ENCODE measurements at regions of chr6 and their contacts with region 1.

Region 1: DNA sequence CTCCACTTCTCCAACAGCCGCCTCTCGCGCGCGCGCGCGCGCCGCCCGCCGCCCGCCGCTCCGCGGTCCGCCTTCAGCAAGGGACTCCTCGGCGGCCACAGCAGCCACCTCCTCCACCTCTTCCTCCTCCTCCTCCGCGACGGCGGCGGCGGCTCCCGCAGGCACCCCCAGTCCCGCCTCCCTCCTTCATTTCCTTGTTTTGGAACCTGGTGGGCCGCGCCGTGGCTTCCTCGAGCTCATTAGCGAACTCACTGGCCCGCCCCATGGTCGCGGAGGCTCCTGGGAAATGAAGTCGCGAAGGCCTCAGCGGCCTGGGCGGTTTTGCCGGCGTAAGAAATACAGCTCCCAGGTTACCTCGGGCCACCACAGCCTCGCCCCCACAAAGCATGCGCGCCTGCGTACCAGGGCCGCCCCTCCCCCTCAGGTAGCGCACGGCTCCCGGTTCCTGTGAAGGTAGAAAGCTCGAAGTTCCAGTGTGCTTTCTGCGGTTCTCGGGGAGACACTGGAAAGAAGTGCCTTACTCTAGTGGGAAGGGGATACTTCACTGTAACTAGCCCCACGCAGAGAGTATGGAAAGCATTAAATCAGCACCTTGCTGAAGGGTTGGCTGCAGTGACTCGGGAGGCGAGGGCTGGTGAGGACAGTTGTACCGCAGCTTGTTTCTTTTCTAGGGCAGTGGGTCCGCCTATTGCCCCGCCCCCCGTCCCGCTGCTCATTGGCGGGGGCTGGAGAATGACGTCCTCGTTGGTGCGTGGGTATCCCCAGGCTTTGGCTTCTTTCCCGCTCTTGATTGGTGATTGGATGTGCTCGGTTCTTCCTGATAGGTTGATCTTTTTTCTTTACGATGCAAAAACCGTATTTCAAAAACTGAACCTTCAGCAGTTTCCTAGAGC is at the start of gene CDK19:
- DNase-seq: peak; percentile 92 to 98
- ATAC-seq: peak; percentile 93 to 94
- H3K4me3 ChIP-seq: peak within 1 kb of the TSS; percentile 98
- H3K27ac ChIP-seq: peak within 1 kb of the TSS; percentile 83 to 95
- H3K4me1 ChIP-seq: peaks cover 16% of the 10 kb centered on the region; the same call in 2 of the 3 replicates
- CTCF ChIP-seq: no peak
- EP300 ChIP-seq: no peak
- POLR2A ChIP-seq: peak; percentile 70
- RAD21 ChIP-seq: no peak
- polyA plus RNA-seq, gene CDK19: 17.3 and 18.6 TPM in 2 replicates

Region 2: DNA sequence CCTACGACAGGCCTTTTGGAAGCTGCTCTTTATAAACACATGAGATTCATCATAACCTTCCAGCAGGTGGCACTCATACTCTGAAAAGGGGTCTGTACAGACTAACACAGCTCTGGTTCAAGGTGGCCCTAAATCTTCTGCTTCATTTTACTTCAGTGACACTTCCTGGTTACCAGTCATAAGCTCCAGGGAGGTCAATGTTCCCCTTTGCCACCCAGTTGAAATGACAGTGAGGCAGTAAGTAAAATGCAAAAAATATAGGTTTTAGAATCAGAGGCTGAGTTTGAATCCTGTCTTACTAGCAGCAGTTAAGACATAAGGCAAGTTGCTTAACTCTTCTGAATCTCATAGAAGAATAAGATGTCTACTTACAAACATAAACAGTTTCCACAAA is 133.0 kb before region 1 on chr6:
- CTCF ChIA-PET with region 1: no interaction called
- POLR2A ChIA-PET with region 1: interaction called, 10 read pairs
- DNase-seq: peak; percentile 35 to 83
- ATAC-seq: peak; percentile 95 to 99
- H3K4me3 ChIP-seq: no peak overlapping the region
- H3K27ac ChIP-seq: peak overlapping the region; percentile 60 to 64; a peak in 3 of 6 replicates
- H3K4me1 ChIP-seq: peaks cover 20% of the 10 kb centered on the region
- CTCF ChIP-seq: peak; percentile 74
- EP300 ChIP-seq: no peak
- POLR2A ChIP-seq: no peak
- RAD21 ChIP-seq: peak; percentile 86 to 91

Region 3: DNA sequence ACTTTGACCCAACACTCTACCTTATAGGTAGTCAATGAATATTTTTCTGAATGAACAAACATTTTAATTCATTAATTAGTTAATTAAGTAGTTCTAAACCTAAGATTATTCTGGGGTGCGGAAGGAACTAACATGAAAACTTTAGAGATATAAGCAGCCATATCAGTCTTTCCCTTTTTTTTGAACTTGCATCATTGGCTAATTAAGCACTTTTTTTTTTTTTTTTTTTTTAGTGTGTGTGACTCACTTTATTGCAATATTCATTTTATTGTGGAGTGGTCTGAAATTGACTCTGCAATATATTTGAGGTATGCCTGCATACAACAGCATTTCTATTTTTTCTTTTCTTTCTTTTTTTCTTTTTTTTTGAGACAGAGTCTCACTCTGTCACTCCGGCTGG is 37.3 kb after region 1 on chr6:
- CTCF ChIA-PET with region 1: no interaction called
- POLR2A ChIA-PET with region 1: no interaction called
- DNase-seq: no peak
- ATAC-seq: no peak
- H3K4me3 ChIP-seq: no peak overlapping the region
- H3K27ac ChIP-seq: no peak overlapping the region
- H3K4me1 ChIP-seq: no peaks in the 10 kb centered on the region
- CTCF ChIP-seq: no peak
- EP300 ChIP-seq: no peak
- POLR2A ChIP-seq: no peak
- RAD21 ChIP-seq: no peak

Region 4: GRCh38 chr6:110944681-110945151 is 129.3 kb after region 1 on chr6:
- CTCF ChIA-PET with region 1: interaction called, 3 read pairs
- POLR2A ChIA-PET with region 1: interaction called, 16 read pairs
- DNase-seq: peak; percentile 70 to 86
- ATAC-seq: peak; percentile 95 to 100
- H3K4me3 ChIP-seq: no peak overlapping the region
- H3K27ac ChIP-seq: peak overlapping the region; percentile 80 to 89
- H3K4me1 ChIP-seq: peaks cover 36% of the 10 kb centered on the region
- CTCF ChIP-seq: no peak
- EP300 ChIP-seq: no peak
- POLR2A ChIP-seq: no peak
- RAD21 ChIP-seq: no peak

Region 5: DNA sequence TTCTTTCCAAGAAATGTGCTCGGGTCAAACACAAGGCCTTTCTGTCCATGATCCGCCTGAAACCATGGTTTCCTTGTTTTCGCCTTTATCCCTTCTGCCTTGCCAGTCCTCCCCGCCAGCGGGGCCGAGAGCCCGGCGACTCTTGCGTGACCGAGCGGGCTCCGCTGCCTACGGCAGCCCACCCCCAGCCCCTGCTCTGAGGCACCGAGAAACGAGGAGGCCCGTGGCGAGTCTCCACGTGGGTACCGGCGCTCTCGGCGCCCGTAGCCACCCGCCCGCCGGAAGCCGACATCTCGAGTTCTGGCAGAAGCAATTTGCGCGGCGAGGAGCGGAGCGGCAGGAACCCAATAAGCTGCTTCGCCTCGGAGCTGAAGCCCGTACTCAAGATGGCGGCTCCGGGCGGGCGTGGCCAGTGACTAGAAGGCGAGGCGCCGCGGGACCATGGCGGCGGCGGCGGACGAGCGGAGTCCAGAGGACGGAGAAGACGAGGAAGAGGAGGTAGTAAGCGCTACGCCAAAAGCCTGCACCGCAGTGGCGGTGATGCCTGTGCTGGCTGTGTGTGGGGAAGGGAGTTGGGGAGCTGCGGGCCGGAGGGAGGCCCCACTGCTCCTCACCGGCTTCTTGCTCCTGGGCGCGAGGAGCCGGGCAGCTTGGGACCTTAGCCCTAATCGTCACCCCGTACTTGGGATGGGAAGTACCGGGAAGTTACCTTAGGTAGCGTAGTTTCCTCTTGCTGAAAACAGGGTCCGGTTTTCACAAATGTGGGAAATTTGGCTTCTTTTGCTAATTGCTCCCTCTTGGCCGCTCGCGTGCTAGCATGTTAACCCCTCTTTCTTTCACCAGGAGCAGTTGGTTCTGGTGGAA is 143.1 kb after region 1 on chr6 and contains the start of gene GTF3C6:
- CTCF ChIA-PET with region 1: no interaction called
- POLR2A ChIA-PET with region 1: interaction called, 12 read pairs
- DNase-seq: peak in 1 of 2 experiments; percentile 92
- ATAC-seq: peak; percentile 99
- H3K4me3 ChIP-seq: peak within 1 kb of the TSS; percentile 83
- H3K27ac ChIP-seq: peak within 1 kb of the TSS; percentile 99 to 100
- H3K4me1 ChIP-seq: peaks cover 21% of the 10 kb centered on the region
- CTCF ChIP-seq: no peak
- EP300 ChIP-seq: no peak
- POLR2A ChIP-seq: peak; percentile 91
- RAD21 ChIP-seq: no peak; a peak in 1 of 5 replicates
- polyA plus RNA-seq, gene GTF3C6: 59.9 and 105 TPM in 2 replicates

Measured in A549 (cell line).